CD8-positive, alpha-beta T cell (primary cell): ENCODE measurements at regions of chr3 and their contacts with region 1.

Region 1: GRCh38 chr3:74465715-74466410 is 148.6 kb downstream of the CNTN3 start:
- DNase-seq: no peak
- ATAC-seq: no peak
- H3K4me3 ChIP-seq: no peak overlapping the region
- H3K4me3 Mint-ChIP-seq: no peak overlapping the region
- H3K27ac ChIP-seq: no peak overlapping the region
- H3K27ac Mint-ChIP-seq: no peak overlapping the region
- H3K4me1 ChIP-seq: no peaks in the 10 kb centered on the region
- H3K4me1 Mint-ChIP-seq: no peaks in the 10 kb centered on the region
- H3K27me3 ChIP-seq: no peaks in the 10 kb centered on the region
- H3K27me3 Mint-ChIP-seq: no peaks in the 10 kb centered on the region
- CTCF ChIP-seq: no peak

Region 2: GRCh38 chr3:74443102-74443501 is 22.8 kb before region 1 on chr3:
- CTCF ChIA-PET with region 1: no interaction called
- POLR2A ChIA-PET with region 1: no interaction called
- intact Hi-C with region 1: loop called in 1 of 2 experiments (anchors 1 kb)
- DNase-seq: no peak
- ATAC-seq: no peak
- H3K4me3 ChIP-seq: no peak overlapping the region
- H3K4me3 Mint-ChIP-seq: no peak overlapping the region
- H3K27ac ChIP-seq: no peak overlapping the region
- H3K27ac Mint-ChIP-seq: no peak overlapping the region
- H3K4me1 ChIP-seq: no peaks in the 10 kb centered on the region
- H3K4me1 Mint-ChIP-seq: no peaks in the 10 kb centered on the region
- H3K27me3 ChIP-seq: no peaks in the 10 kb centered on the region
- H3K27me3 Mint-ChIP-seq: no peaks in the 10 kb centered on the region
- CTCF ChIP-seq: no peak